ENCODE measurements at regions of chr15 and their contacts with region 1.

Region 1: GRCh38 chr15:41774062-41774881 is at the start of gene MAPKBP1:
- DNase-seq: peak; percentile 98
- H3K4me3 ChIP-seq: peak within 1 kb of the TSS; percentile 78
- H3K27ac ChIP-seq: peak within 1 kb of the TSS; percentile 79
- H3K4me1 ChIP-seq: peaks cover 53% of the 10 kb centered on the region
- CTCF ChIP-seq: peak; percentile 85
- total RNA-seq, gene MAPKBP1: 13.4 and 14.5 TPM in 2 replicates

Region 2: DNA sequence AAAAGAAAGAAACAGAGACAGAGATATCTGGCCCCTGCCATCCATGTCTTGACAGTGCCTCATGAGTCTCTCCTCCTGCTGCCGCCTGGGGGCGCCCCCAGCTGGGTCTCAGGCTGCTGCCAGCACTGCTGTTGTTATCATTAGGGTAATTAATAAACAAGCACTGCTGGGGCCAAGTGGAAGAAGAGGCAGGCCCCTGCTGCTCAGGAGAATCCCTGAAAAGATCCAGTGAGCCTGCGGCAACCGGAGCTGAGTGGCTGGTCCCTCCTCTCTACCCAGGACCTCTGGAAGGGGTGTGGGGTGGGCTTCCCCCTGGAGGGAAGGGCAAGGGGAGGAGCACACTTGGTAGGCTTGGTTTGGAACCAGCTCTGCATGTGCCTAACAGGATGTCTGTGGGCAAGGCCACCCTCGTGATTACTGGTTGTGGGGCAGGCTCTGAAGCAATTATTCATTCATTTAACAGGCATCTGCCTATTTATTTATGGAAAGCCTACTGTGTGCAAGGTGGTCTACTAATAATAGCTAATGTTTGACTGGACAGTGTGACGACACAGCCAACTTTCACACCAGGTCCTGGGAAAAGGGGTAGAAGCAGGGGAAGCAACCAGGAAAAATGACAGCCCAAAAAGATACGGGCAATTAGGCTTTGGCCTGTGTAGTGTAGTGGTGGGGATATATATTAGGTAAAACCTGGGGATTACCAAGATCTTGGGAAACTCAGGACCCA is 216.4 kb before region 1 on chr15:
- CTCF ChIA-PET with region 1: interaction called, 3 read pairs
- POLR2A ChIA-PET with region 1: no interaction called
- intact Hi-C with region 1: loop called (anchors 5 kb)
- DNase-seq: peak; percentile 77
- H3K4me3 ChIP-seq: peak overlapping the region; percentile 50
- H3K27ac ChIP-seq: no peak overlapping the region
- H3K4me1 ChIP-seq: peaks cover 30% of the 10 kb centered on the region
- CTCF ChIP-seq: peak; percentile 99

Region 3: GRCh38 chr15:41603941-41604911 is 170.0 kb before region 1 on chr15:
- CTCF ChIA-PET with region 1: no interaction called
- POLR2A ChIA-PET with region 1: no interaction called
- intact Hi-C with region 1: loop called (anchors 5 kb)
- DNase-seq: peak; percentile 64
- H3K4me3 ChIP-seq: no peak overlapping the region
- H3K27ac ChIP-seq: no peak overlapping the region
- H3K4me1 ChIP-seq: peaks cover 8% of the 10 kb centered on the region
- CTCF ChIP-seq: peak; percentile 79

Region 4: DNA sequence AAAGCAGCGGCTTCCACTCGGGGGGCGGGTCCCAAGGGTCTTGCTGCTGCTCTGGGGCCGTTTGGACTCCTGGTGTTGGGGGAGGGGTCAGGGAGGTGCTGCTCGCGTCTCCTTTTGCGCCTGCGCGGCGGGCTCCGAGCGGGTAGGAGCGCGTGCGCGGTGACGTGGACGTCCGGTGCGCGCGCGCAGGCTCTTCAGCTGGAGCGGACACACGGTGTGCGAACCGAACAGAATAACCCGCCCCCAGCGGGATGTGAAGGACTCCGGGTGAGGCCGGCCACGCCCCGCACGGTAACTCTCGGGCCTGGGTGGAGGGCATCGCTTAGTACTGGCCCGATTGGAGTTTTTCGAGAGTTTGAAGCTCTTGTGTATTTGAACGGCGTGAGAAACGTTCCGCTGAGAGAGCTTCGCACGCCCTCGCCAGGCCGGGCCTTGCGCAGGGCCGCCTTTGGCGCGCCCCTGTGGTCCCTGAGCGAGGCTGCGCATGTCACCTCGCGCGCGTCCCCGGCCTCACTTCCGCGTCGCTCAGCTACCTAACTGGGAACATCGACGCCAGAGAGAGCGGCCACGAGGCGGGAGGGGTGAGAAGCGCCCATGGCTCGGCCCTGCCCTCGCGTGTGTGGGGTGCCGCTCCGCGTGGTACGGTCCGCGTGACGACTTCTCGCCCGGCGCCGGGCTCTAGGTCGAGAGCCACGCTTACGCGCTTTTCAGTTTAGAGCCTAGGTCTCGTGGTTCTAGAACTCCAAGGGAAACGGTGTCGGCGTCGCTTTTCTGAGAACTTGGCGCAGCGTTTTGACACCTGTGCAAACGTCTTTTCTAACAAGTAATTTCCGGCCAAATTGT is 113.8 kb before region 1 on chr15 and contains the start of gene MGA:
- CTCF ChIA-PET with region 1: interaction called, 3 read pairs
- POLR2A ChIA-PET with region 1: interaction called, 4 read pairs
- intact Hi-C with region 1: loop called (anchors 1 kb)
- DNase-seq: peak; percentile 98
- H3K4me3 ChIP-seq: peak within 1 kb of the TSS; percentile 78
- H3K27ac ChIP-seq: peak within 1 kb of the TSS; percentile 95
- H3K4me1 ChIP-seq: peaks cover 44% of the 10 kb centered on the region
- CTCF ChIP-seq: no peak
- total RNA-seq, gene MGA: 48.8 and 60.1 TPM in 2 replicates

Region 5: GRCh38 chr15:41695750-41696426 is 78.4 kb before region 1 on chr15:
- CTCF ChIA-PET with region 1: no interaction called
- POLR2A ChIA-PET with region 1: interaction called, 3 read pairs
- intact Hi-C with region 1: loop called (anchors 2 kb)
- DNase-seq: peak; percentile 81
- H3K4me3 ChIP-seq: peak overlapping the region; percentile 3
- H3K27ac ChIP-seq: peak overlapping the region; percentile 27
- H3K4me1 ChIP-seq: peaks cover 31% of the 10 kb centered on the region
- CTCF ChIP-seq: peak; percentile 84

Region 6: GRCh38 chr15:41756198-41756597 is 18.1 kb before region 1 on chr15:
- CTCF ChIA-PET with region 1: no interaction called
- POLR2A ChIA-PET with region 1: no interaction called
- intact Hi-C with region 1: no loop called
- DNase-seq: no peak
- H3K4me3 ChIP-seq: no peak overlapping the region
- H3K27ac ChIP-seq: no peak overlapping the region
- H3K4me1 ChIP-seq: no peaks in the 10 kb centered on the region
- CTCF ChIP-seq: no peak

Region 7: DNA sequence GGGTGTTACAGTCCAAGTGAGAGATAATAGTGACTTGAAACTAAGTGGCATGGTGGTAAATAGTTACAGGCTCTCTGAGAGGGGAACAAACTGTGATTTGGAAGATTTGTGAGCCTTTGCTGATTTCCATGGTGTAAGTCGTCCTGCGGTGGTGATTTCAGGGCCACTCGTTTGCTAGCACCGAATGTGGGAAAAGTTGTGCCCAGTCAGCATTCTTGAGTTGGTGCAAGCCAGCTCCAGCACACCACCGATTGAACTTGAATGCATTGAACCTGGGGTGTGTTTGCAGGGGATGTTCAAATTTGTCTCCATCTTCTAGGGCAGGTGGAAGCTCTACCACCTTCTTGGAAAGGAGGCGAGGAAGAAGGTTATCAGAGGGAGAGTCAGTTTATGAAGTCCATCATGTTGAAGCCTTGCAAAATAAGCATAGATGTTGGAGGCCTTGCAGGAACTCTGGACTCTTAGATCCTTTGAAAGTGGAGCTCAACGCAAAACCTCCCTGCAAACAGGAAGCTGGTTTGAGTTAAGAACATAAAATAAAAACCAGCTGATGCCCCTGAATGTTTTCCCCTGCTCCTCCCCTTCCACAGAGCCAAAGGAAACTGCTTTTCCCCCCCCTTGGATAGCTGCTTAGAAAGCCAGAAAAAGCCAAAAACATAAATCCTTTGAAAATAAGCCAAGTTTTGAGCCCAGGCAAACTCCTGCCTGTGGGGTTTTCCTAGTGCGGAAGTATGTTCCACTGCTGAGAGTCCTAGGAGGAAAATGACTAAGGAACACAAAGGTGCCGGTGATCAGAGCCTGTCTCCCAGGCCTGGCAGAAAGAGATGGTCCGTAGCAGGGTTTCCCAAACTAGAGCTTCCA is 22.0 kb after region 1 on chr15:
- CTCF ChIA-PET with region 1: interaction called, 10 read pairs
- POLR2A ChIA-PET with region 1: interaction called, 4 read pairs
- intact Hi-C with region 1: loop called (anchors 2 kb)
- DNase-seq: no peak
- H3K4me3 ChIP-seq: peak overlapping the region; percentile 4
- H3K27ac ChIP-seq: peak overlapping the region; percentile 56
- H3K4me1 ChIP-seq: peaks cover 49% of the 10 kb centered on the region
- CTCF ChIP-seq: no peak

Region 8: GRCh38 chr15:41904541-41905005 is 130.3 kb after region 1 on chr15:
- CTCF ChIA-PET with region 1: interaction called, 13 read pairs
- POLR2A ChIA-PET with region 1: no interaction called
- intact Hi-C with region 1: loop called (anchors 1 kb)
- DNase-seq: peak; percentile 69
- H3K4me3 ChIP-seq: no peak overlapping the region
- H3K27ac ChIP-seq: no peak overlapping the region
- H3K4me1 ChIP-seq: no peaks in the 10 kb centered on the region
- CTCF ChIP-seq: peak; percentile 90

Region 9: GRCh38 chr15:41936649-41937567 is 162.6 kb after region 1 on chr15:
- CTCF ChIA-PET with region 1: no interaction called
- POLR2A ChIA-PET with region 1: no interaction called
- intact Hi-C with region 1: no loop called
- DNase-seq: no peak
- H3K4me3 ChIP-seq: no peak overlapping the region
- H3K27ac ChIP-seq: no peak overlapping the region
- H3K4me1 ChIP-seq: peaks cover 18% of the 10 kb centered on the region
- CTCF ChIP-seq: no peak